Activated naive CD4-positive, alpha-beta T cell treated with anti-CD3 and anti-CD28 coated beads for 36 hours (primary cell): ENCODE measurements at regions of chr6 and their contacts with region 1.

Region 1: DNA sequence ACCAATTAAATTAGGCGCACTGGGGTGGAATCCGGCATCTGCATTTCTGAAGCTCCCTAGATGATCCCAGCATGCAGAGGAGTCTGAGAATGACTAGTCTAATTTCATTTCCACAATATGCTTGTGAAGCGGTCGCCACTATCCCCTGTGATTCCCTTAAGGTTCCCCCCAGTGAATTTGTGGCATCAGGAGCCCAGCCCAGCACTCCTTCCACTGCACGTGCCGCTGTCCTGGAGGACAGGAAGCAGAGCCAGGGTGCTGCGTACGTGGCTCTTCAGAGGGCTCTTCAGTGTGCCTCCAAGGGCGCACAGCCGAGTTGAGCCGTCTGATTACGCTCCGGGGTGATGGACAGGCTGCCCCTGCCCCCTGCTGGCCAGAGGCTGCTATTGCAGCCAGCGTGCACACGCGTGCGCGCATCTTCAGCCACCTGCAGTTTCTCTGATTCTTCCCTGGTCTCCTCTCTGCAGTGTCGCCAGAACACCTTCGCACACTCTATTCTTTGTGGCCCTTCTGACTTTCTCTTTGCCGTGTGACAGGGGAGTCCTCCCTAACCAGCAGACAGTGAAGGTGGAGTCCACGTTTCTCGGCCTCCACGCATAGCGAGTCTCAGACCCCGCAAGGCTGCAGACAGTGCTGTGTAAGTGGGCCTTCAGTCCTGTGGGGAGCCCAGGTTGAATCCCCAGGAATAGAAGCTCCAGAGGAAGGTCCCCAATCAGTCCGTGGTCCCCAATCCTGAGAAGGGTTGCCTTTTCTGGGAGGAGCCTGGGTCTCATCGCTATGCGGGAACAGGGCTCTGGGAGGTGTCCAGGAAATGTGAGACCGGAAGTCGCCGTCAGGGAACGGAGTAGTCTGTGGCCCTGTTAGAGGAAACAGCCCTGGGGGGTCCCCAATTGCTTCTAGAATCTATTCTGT is 16.5 kb upstream of the NCR2 start:
- DNase-seq: peak; percentile 92
- H3K4me3 Mint-ChIP-seq: peak overlapping the region; percentile 71
- H3K27ac Mint-ChIP-seq: peak overlapping the region; percentile 73
- H3K4me1 Mint-ChIP-seq: peaks cover 13% of the 10 kb centered on the region
- H3K27me3 Mint-ChIP-seq: peaks cover 8% of the 10 kb centered on the region

Region 2: DNA sequence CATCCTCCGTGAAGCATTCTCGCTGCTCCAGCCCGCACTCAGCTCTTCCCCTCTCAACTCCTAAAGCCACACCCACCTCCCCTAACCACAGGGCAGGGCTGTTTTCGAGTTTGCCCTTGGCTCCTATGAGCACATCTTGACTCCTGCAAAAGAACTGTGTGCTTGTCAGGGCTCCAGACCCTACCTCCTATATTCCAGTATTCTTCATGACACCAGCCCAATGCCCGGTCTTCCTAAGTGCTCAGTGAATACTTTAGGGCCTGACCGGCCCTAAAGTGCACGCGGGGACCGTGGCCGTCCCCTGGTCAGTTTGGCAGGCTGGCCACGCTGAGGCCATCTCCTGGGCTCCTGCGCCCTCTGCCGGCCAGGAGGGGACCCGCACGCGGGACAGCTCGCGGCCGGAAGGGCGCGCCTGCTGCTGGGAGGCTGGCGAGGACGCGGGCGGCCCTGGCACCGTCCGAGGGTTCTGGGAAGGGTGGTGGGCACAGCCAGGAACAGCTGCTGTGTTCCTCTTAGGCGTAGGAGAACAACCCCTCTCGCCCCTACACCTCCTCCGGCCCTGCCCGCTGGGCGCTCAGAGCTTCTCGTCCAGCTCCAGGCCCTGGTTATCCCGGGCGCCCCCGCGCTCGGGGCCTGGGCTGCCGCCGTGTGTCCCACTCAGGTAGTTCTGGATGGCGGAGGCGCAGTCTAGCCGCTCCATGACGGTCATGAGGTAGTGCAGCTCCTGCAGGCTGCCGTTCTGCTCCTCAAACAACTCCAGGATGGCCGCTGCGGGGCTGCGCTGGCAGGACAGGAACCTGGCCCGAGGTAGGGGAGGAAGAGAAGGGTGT is 290.9 kb before region 1 on chr6:
- CTCF ChIA-PET with region 1: no interaction called
- intact Hi-C with region 1: loop called (anchors 2 kb)
- DNase-seq: peak; percentile 79
- H3K4me3 Mint-ChIP-seq: peak overlapping the region; percentile 80
- H3K27ac Mint-ChIP-seq: peak overlapping the region; percentile 62
- H3K4me1 Mint-ChIP-seq: peaks cover 17% of the 10 kb centered on the region
- H3K27me3 Mint-ChIP-seq: no peaks in the 10 kb centered on the region

Region 3: DNA sequence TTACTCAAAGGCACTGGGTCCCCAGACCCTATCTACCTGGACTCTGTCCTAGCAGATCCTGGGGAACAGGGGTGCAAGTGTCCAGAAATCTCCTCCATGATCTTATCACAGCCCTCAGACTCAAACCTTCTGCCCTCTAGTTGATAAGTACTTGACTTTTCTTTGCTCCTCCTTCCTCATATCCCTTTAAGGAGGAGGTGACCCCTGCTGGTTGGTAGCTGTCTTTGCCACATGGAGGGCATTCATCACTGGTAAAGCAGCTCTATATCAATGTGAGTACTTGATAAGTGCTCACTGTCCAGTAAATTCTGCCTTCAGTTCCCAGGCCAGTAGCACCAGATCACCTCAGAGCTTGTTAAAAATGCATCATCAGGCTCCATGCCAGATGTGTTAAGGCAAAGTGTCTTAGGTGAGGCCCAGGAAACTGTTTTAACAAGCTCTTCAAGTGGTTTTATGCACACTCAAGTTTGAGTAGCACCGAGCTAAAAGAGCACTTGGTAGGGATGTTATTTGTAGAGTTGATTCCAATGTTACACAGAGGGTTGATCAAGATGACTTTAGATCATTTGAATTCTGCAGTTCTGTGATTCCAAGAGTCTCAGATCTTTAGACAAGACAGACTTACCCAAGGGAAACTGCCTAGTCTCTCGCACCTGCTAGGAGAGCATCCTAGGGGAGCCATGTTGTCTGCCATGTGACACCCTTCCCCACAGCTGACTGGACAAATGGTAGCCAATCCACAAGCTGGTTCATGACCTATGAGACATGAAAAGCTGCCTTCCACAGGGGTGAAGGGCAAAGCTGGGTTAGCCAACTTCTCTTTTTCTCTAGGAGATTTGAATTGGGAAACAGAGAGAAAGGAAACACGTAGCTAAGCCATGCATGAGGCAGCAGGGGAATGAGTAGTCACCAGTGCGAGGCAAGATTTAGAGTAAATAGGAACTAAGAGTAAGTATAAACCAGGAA is 136.6 kb before region 1 on chr6:
- CTCF ChIA-PET with region 1: interaction called, 9 read pairs
- intact Hi-C with region 1: loop called (anchors 2 kb)
- DNase-seq: peak; percentile 74
- H3K4me3 Mint-ChIP-seq: no peak overlapping the region
- H3K27ac Mint-ChIP-seq: no peak overlapping the region
- H3K4me1 Mint-ChIP-seq: peaks cover 24% of the 10 kb centered on the region
- H3K27me3 Mint-ChIP-seq: no peaks in the 10 kb centered on the region

Region 4: DNA sequence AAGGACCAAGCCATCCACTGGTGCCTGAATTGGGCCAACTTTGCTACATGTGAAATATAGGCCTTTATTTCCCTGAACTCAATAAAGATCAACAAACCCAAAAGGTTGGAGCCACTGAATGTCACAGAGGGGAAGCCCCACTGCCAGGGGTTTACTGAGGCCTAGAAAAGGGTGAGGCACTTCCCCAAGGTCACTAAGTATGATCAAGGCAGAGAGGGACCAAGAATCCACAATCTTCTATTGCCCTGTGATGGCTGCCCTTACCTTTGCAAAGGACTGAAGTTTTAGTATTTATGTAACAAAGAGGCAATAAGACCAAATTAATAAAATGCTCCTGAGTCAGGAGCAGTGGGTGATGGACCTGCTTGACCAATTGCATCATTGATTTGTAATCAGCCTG is 50.4 kb before region 1 on chr6:
- CTCF ChIA-PET with region 1: no interaction called
- intact Hi-C with region 1: no loop called
- DNase-seq: no peak
- H3K4me3 Mint-ChIP-seq: no peak overlapping the region
- H3K27ac Mint-ChIP-seq: no peak overlapping the region
- H3K4me1 Mint-ChIP-seq: peaks cover 8% of the 10 kb centered on the region
- H3K27me3 Mint-ChIP-seq: no peaks in the 10 kb centered on the region

Region 5: DNA sequence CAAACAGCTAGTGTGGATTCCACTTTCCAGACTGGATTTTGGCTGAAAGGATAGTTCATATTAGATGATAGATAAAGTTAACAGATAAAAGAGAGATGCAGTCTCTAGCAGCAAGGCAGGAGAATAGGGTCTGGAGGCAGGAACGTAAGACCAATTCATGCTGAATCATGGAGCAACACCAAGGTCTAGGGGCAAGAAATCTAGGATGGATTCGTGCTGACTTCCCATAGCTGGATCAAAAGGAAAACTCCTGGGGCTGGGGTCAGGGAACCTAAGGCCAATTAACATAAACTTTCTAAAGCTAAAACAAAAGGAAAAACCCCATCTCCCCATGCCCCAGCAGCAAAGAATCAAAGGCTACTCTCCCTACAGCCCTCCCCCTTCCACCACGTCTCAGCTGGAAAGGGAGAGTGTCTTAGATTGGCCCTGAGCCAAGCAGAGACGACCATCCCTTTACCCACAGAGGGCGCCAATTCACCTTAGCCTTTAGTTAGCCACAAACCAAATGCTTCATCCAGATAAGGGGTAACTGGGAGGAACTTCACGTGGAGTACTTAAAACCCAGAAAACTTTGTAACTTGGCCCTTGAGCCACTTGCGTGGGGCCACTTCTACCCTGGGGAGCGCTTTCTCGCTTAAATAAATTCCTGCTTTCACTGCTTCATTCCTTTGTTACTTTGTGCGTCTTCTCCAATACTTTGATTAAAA is 40.1 kb before region 1 on chr6:
- CTCF ChIA-PET with region 1: interaction called, 18 read pairs
- intact Hi-C with region 1: loop called (anchors 1 kb)
- DNase-seq: peak; percentile 89
- H3K4me3 Mint-ChIP-seq: no peak overlapping the region
- H3K27ac Mint-ChIP-seq: peak overlapping the region; percentile 20
- H3K4me1 Mint-ChIP-seq: peaks cover 14% of the 10 kb centered on the region
- H3K27me3 Mint-ChIP-seq: no peaks in the 10 kb centered on the region

Region 6: GRCh38 chr6:41334482-41335040 is 15.7 kb after region 1 on chr6:
- CTCF ChIA-PET with region 1: interaction called, 39 read pairs
- intact Hi-C with region 1: loop called (anchors 2 kb)
- DNase-seq: peak; percentile 30
- H3K4me3 Mint-ChIP-seq: no peak overlapping the region
- H3K27ac Mint-ChIP-seq: peak overlapping the region; percentile 78
- H3K4me1 Mint-ChIP-seq: peaks cover 46% of the 10 kb centered on the region
- H3K27me3 Mint-ChIP-seq: no peaks in the 10 kb centered on the region